Cardiac septum (tissue), 1 donor: ENCODE measurements at regions of chr18 and their contacts with region 1.

Region 1: GRCh38 chr18:70044632-70045031 is 97.0 kb upstream of the CD226 start:
- DNase-seq: no peak

Region 2: DNA sequence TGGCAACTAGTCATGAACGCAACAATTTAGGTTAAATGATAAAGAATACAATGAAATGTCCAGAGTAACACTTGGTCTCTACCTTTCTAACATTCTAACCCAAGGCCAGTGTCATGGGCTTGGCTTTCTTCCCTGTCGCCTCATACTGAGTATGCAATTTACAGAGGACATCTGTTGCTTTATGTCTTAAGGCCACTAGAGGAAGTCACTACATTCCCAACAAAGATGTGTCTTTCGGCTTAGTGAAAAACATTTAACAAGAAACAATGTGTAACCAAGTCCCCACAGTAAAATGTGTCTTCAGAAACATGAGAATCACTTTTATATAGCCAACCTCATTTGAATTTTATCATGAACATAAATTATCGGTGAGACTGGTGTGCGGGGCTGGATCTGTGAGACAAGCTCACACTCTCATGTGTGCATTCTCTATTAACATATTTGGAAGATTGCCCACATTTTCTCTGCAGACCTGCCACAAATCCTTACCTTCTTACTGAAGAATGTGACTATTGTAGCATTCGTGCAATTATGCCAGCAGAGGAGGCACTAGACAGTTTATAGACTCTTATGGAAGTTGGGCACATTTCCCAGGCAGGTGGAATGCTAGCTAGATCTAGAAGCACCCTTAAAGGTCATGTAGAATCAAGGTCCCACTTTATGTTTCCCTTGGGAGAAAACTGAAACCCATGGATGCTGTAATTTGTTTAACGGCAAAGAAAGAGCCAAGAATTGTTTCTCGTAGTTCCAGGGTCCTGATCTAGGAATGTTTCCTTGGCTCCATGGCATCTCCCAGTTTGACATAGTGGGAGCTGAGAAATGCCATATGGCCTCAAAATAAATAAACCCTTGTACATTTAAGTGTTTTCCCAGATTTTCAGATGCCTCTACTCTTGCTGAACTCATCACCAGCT is 198.8 kb before region 1 on chr18:
- intact Hi-C with region 1: loop called (anchors 10 kb)
- DNase-seq: no peak

Region 3: GRCh38 chr18:69998523-69998987 is 46.1 kb before region 1 on chr18:
- intact Hi-C with region 1: loop called (anchors 5 kb)
- DNase-seq: no peak

Region 4: GRCh38 chr18:70015127-70015526 is 29.5 kb before region 1 on chr18:
- intact Hi-C with region 1: no loop called
- DNase-seq: no peak